ENCODE measurements at regions of chr9 and their contacts with region 1.

Region 1: DNA sequence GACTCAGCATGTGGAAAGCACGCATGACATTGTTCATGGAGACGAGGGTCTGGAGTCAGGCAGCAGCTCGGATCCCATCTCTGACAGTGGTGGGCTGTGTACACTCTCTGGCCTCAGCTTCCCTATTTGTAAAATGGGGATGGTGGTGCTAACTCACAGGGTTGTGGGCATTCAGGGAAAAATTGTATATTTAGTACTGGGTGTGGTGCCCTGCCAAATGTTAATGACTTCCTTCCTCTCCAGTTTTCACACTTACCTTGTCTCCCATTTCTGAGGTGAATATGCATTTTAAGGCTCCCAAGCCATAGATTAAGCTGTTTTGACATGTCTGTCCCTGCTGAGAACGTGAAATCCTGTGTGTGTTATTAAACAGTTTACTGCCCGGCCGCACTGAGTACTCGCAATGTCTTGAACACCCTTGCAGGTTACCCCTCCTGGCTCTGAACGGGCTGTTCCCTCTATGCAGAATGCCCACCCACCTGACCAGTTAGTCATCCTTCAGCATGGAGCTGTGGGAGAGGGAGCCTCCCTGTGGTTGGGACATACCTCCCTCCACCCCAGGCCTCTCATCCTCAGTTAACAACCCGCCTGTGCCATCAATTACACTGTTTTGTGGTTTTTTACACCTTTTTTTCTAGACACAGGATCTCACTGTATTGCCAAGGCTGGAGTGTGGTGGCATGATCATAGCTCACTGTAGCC is 25.8 kb downstream of the TJP2 start:
- DNase-seq: peak; percentile 80
- H3K4me3 ChIP-seq: no peak overlapping the region
- H3K27ac ChIP-seq: no peak overlapping the region
- H3K4me1 ChIP-seq: peaks cover 21% of the 10 kb centered on the region
- H3K27me3 ChIP-seq: no peaks in the 10 kb centered on the region
- CTCF ChIP-seq: peak in 1 of 2 donors; percentile 41

Region 2: DNA sequence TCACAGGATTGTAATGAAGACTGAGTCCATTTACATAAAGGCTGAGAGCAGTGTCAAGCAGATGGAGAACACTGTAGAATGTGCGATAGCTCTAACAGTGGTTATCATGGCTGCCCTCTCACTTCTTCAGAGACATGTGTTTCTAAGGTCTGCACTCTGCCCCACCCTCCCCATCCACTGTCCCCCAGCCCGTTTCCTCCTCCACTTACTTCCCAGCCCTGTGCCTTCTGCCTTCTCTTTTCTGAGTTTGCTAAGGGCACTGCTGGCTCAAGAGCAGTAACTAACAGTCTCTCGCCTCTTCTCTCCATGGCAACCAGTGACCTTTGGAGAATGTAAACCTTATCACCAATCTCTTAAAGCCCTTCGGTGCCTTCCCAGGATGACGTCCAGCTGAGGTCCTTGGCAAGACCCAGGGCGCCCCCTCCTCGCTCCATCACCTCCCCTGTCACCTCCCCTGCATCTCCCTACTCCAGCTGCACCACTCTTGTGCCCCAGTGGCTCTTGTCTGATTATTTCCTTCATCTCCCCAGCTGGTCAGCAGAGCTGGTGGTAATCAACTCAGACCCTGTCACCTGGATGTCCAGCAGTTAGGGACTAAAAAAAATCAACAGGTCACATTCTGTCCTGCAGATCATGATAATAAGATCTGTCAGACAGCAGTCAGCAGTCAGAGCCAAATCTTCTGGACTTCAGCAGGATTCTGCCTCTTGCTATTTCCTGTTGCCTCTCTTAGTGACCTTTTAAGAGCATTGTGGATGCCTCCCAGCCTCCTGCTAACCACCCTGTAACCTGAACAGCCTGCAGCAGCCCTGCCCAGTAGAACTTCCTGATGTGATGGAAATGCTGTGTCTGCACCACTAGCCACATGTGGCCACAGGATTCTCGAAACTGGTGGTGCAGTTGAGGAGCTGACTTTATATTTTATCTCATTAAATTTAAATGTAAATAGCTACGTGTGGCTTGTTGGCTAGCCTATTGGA is 155.4 kb before region 1 on chr9:
- CTCF ChIA-PET with region 1: no interaction called
- dilution Hi-C with region 1: loop called (anchors 10 kb)
- in situ Hi-C with region 1: no loop called
- intact Hi-C with region 1: no loop called
- DNase-seq: peak; percentile 5
- H3K4me3 ChIP-seq: no peak overlapping the region
- H3K27ac ChIP-seq: no peak overlapping the region
- H3K4me1 ChIP-seq: no peaks in the 10 kb centered on the region
- H3K27me3 ChIP-seq: no peaks in the 10 kb centered on the region
- CTCF ChIP-seq: no peak

Region 3: GRCh38 chr9:69078581-69078980 is 121.3 kb before region 1 on chr9:
- CTCF ChIA-PET with region 1: no interaction called
- dilution Hi-C with region 1: loop called (anchors 10 kb)
- in situ Hi-C with region 1: no loop called
- intact Hi-C with region 1: no loop called
- DNase-seq: no peak
- H3K4me3 ChIP-seq: no peak overlapping the region
- H3K27ac ChIP-seq: no peak overlapping the region
- H3K4me1 ChIP-seq: no peaks in the 10 kb centered on the region
- H3K27me3 ChIP-seq: no peaks in the 10 kb centered on the region
- CTCF ChIP-seq: no peak

Region 4: GRCh38 chr9:69097064-69097463 is 102.9 kb before region 1 on chr9:
- CTCF ChIA-PET with region 1: no interaction called
- dilution Hi-C with region 1: no loop called
- in situ Hi-C with region 1: no loop called
- intact Hi-C with region 1: no loop called
- DNase-seq: peak; percentile 93
- H3K4me3 ChIP-seq: no peak overlapping the region
- H3K27ac ChIP-seq: peak overlapping the region; percentile 84
- H3K4me1 ChIP-seq: peaks cover 11% of the 10 kb centered on the region
- H3K27me3 ChIP-seq: no peaks in the 10 kb centered on the region
- CTCF ChIP-seq: no peak